ENCODE measurements at regions of chr5 and their contacts with region 1.

Region 1: GRCh38 chr5:181159286-181159829 is 12.0 kb downstream of the OR2V2 start:
- DNase-seq: peak in 1 of 2 donors; percentile 89
- H3K4me3 ChIP-seq: no peak overlapping the region
- H3K27ac ChIP-seq: no peak overlapping the region
- H3K4me1 ChIP-seq: peaks cover 0 to 3% of the 10 kb centered on the region in 2 donors
- H3K27me3 ChIP-seq: no peaks in the 10 kb centered on the region
- CTCF ChIP-seq: peak; percentile 70 to 83 (median 75)

Region 2: DNA sequence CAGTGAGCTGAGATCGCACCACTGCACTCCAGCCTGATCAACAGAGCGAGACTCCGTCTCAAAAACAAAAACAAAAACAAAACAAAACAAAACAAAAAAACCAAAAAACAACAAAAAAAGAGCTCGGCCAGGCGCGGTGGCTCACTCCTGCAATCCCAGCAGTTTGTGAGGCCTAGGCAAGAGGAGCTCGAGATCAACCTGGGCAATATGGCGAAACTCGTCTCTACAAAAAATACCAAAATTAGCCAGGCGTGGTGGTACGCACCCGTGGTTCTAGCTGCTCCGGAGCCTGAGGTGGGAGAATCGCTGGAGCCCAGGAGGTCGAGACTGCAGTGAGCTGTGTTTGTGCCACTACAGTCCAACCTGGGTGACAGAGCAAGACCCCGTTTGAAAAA is 25.5 kb after region 1 on chr5:
- intact Hi-C with region 1: loop called (anchors 1 kb)
- DNase-seq: no peak
- H3K4me3 ChIP-seq: peak overlapping the region; percentile 63 to 70
- H3K27ac ChIP-seq: peak overlapping the region in 1 of 2 donors; percentile 36
- H3K4me1 ChIP-seq: peaks cover 0 to 10% of the 10 kb centered on the region in 2 donors
- H3K27me3 ChIP-seq: no peaks in the 10 kb centered on the region
- CTCF ChIP-seq: no peak